MCF 10A (cell line): ENCODE measurements at regions of chr3 and their contacts with region 1.

Region 1: DNA sequence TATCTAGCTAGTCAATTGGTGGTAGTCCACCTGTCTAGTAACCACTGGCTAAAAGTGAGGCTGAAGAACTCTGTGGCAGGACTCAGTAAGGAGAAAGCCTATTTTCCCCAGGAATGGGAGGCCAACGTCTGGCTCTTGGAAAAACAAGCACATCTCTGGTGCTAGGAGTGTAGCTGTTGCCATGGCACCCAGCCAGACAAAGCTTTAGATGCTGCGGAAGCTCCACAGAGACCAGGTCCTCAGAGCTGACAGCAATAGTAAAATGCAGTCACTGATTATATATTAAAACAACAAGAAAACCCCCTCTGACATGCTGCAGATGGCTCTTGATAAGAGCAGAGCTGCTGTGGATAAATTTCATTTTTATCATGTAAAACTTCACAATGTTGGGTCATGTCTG is 124.9 kb upstream of the STRIT1 start:
- DNase-seq: no peak
- H3K4me3 Mint-ChIP-seq: no peak overlapping the region
- H3K27ac Mint-ChIP-seq: no peak overlapping the region
- H3K4me1 Mint-ChIP-seq: peaks cover 17% of the 10 kb centered on the region
- H3K27me3 Mint-ChIP-seq: no peaks in the 10 kb centered on the region
- CTCF ChIP-seq: no peak

Region 2: DNA sequence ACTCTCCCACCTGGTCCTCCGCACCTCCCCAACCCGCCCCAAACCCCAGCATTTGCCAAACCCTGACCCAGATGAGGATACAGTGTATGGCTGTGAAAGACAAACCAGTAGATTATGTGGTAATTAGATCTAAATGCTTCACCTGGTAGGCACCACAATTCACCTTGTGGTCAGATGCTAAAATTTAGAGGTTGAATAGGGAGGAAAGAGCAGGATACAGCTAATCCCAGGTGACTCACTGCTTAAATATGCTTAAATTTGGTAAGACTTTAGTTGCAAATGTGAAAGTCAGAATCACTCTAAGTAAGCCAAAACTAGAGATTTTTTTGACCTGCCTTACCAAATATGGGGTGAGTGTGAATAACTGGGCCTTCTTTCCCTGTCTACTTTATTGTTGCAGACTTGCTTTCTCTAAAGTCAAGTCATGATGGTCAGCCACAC is 232.8 kb before region 1 on chr3:
- CTCF ChIA-PET with region 1: no interaction called
- POLR2A ChIA-PET with region 1: no interaction called
- intact Hi-C with region 1: no loop called
- DNase-seq: peak; percentile 56
- H3K4me3 Mint-ChIP-seq: no peak overlapping the region
- H3K27ac Mint-ChIP-seq: no peak overlapping the region
- H3K4me1 Mint-ChIP-seq: peaks cover 14% of the 10 kb centered on the region
- H3K27me3 Mint-ChIP-seq: no peaks in the 10 kb centered on the region
- CTCF ChIP-seq: no peak

Region 3: DNA sequence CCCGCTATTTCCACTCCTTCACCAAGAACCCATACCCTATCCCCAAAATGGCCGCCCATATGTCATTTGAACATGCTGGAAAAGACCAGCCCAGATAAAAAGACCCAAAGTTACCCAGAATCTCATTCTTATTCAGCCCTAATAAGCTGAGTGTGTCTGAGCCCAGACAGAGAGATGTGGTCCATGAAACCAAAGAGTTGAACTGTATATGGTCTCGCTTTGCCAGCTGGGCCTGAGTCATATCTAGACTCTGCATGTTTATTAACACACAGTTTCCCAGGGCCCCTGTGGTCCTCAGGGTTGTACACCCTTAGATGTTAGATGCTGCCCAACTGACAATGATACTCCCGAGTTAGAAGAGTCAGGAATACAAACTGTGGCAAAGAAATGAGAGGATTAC is 77.0 kb after region 1 on chr3:
- CTCF ChIA-PET with region 1: no interaction called
- POLR2A ChIA-PET with region 1: no interaction called
- intact Hi-C with region 1: loop called (anchors 5 kb)
- DNase-seq: no peak
- H3K4me3 Mint-ChIP-seq: no peak overlapping the region
- H3K27ac Mint-ChIP-seq: no peak overlapping the region
- H3K4me1 Mint-ChIP-seq: peaks cover 17% of the 10 kb centered on the region
- H3K27me3 Mint-ChIP-seq: no peaks in the 10 kb centered on the region
- CTCF ChIP-seq: no peak